Prostate gland (tissue), 2 donors: ENCODE measurements at regions of chr1 and their contacts with region 1.

Region 1: GRCh38 chr1:204828338-204828850 is 42.3 kb upstream of the NFASC start:
- DNase-seq: no peak
- H3K4me3 ChIP-seq: peak overlapping the region; percentile 32 to 36
- H3K27ac ChIP-seq: peak overlapping the region in 1 of 2 donors; percentile 45
- H3K4me1 ChIP-seq: no peaks in the 10 kb centered on the region
- H3K27me3 ChIP-seq: no peaks in the 10 kb centered on the region
- CTCF ChIP-seq: peak in 2 of 4 experiments; percentile 37 to 41
- POLR2A ChIP-seq: no peak

Region 2: DNA sequence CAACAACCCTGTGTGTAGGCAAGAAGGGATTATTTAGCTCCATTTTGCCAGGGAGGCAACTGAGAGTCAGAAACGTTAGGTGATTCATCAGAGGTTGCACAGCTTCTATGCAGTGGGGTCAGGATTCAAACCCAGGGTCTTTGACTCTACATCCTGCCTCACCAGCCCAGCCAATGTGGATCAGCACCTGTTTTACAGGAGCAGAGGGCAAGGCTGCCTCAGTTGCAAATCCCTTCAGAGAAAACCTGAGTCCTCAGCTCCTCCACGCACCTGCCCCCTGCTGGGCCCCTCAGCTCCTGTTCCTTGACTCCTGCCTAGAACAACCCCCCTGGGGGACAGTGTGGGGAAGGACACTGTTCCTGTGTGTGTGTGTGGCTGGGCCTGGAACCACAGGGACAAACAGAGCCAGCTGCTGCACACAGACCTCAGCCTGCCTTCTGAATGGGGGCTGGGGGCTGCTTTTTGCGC is 204.5 kb before region 1 on chr1:
- intact Hi-C with region 1: no loop called
- DNase-seq: no peak
- H3K4me3 ChIP-seq: no peak overlapping the region
- H3K27ac ChIP-seq: no peak overlapping the region
- H3K4me1 ChIP-seq: no peaks in the 10 kb centered on the region
- H3K27me3 ChIP-seq: no peaks in the 10 kb centered on the region
- CTCF ChIP-seq: no peak
- POLR2A ChIP-seq: no peak

Region 3: GRCh38 chr1:204872262-204872881 is 44.0 kb after region 1 on chr1:
- intact Hi-C with region 1: loop called (anchors 5 kb)
- DNase-seq: no peak
- H3K4me3 ChIP-seq: no peak overlapping the region
- H3K27ac ChIP-seq: no peak overlapping the region
- H3K4me1 ChIP-seq: no peaks in the 10 kb centered on the region
- H3K27me3 ChIP-seq: no peaks in the 10 kb centered on the region
- CTCF ChIP-seq: no peak
- POLR2A ChIP-seq: no peak

Region 4: DNA sequence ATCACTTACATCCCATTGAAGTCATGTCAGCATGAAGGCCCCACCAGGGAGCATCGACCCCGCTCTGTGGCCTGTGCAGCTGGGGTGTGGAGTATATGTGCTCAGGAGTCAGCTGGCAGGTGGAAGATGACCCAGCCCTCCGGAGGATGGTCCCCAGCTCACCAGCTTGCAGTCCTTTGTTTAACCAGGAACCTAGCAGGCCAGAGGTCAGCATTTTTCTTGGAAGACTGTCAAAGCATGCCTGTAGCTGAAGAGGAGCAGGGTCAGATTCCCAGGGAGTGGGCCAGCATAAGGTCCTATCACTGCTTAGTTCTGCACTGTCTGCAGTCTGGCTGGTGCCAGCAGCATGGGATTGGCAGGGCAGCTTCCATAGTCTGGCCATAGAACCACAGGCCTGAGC is 55.0 kb after region 1 on chr1:
- intact Hi-C with region 1: loop called (anchors 5 kb)
- DNase-seq: no peak
- H3K4me3 ChIP-seq: no peak overlapping the region
- H3K27ac ChIP-seq: no peak overlapping the region
- H3K4me1 ChIP-seq: no peaks in the 10 kb centered on the region
- H3K27me3 ChIP-seq: no peaks in the 10 kb centered on the region
- CTCF ChIP-seq: no peak
- POLR2A ChIP-seq: no peak